PC-3 (cell line): ENCODE measurements at regions of chr4 and their contacts with region 1.

Region 1: GRCh38 chr4:101347557-101348366 is 436 bp upstream of the PPP3CA start:
- DNase-seq: peak; percentile 91
- ATAC-seq: peak; percentile 65
- H3K4me3 ChIP-seq: peak overlapping the region; percentile 97
- H3K27ac ChIP-seq: peak overlapping the region; percentile 93
- H3K4me1 ChIP-seq: peaks cover 27% of the 10 kb centered on the region
- H3K27me3 ChIP-seq: no peaks in the 10 kb centered on the region
- CTCF ChIP-seq: no peak

Region 2: GRCh38 chr4:101160792-101161592 is 186.8 kb before region 1 on chr4:
- CTCF ChIA-PET with region 1: no interaction called
- POLR2A ChIA-PET with region 1: interaction called, 6 read pairs
- intact Hi-C with region 1: loop called (anchors 1 kb)
- DNase-seq: peak; percentile 91
- ATAC-seq: peak; percentile 88
- H3K4me3 ChIP-seq: no peak overlapping the region
- H3K27ac ChIP-seq: peak overlapping the region; percentile 100
- H3K4me1 ChIP-seq: peaks cover 31% of the 10 kb centered on the region
- H3K27me3 ChIP-seq: no peaks in the 10 kb centered on the region
- CTCF ChIP-seq: no peak

Region 3: GRCh38 chr4:101259876-101260275 is 87.9 kb before region 1 on chr4:
- CTCF ChIA-PET with region 1: no interaction called
- POLR2A ChIA-PET with region 1: no interaction called
- intact Hi-C with region 1: loop called (anchors 10 kb)
- DNase-seq: no peak
- ATAC-seq: no peak
- H3K4me3 ChIP-seq: no peak overlapping the region
- H3K27ac ChIP-seq: no peak overlapping the region
- H3K4me1 ChIP-seq: peaks cover 13% of the 10 kb centered on the region
- H3K27me3 ChIP-seq: no peaks in the 10 kb centered on the region
- CTCF ChIP-seq: no peak

Region 4: GRCh38 chr4:101563126-101563525 is 215.4 kb after region 1 on chr4:
- CTCF ChIA-PET with region 1: no interaction called
- POLR2A ChIA-PET with region 1: no interaction called
- intact Hi-C with region 1: no loop called
- DNase-seq: no peak
- ATAC-seq: no peak
- H3K4me3 ChIP-seq: no peak overlapping the region
- H3K27ac ChIP-seq: no peak overlapping the region
- H3K4me1 ChIP-seq: no peaks in the 10 kb centered on the region
- H3K27me3 ChIP-seq: no peaks in the 10 kb centered on the region
- CTCF ChIP-seq: no peak

Region 5: GRCh38 chr4:101730291-101731117 is 382.7 kb after region 1 on chr4:
- CTCF ChIA-PET with region 1: interaction called, 3 read pairs
- POLR2A ChIA-PET with region 1: interaction called, 6 read pairs
- intact Hi-C with region 1: loop called (anchors 2 kb)
- DNase-seq: peak; percentile 78
- ATAC-seq: peak; percentile 50
- H3K4me3 ChIP-seq: no peak overlapping the region
- H3K27ac ChIP-seq: no peak overlapping the region
- H3K4me1 ChIP-seq: no peaks in the 10 kb centered on the region
- H3K27me3 ChIP-seq: no peaks in the 10 kb centered on the region
- CTCF ChIP-seq: peak; percentile 81

Region 6: DNA sequence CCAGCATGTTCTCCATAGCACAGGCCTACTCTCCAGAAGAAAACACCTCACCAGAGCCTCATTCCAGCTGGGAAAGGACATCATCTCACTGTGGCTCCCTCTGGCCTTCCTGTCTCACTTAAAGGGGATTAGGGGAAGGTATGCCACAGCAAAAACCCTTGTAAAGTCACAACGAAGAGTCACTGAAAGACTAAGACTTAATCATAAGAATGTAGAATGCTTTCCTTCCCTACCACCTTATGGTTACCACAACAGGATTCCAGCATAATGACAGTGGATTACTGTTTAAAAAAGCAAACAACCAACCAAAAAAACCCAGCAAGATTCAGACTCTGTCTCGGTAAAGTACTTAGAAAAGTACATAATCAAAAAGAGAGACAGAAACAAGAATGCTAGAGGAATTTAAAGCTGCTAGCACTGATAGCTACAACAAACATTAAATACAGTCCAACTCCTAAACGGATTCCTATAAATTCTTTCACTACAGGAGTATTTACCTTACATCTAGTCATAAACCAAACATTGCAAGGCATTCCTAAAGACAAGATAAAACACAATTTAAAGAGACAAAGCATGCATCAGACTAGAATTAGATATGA is 517.8 kb after region 1 on chr4:
- CTCF ChIA-PET with region 1: no interaction called
- POLR2A ChIA-PET with region 1: no interaction called
- intact Hi-C with region 1: loop called (anchors 2 kb)
- DNase-seq: peak; percentile 83
- ATAC-seq: peak; percentile 89
- H3K4me3 ChIP-seq: peak overlapping the region; percentile 1; the same call in 1 of the 2 replicates
- H3K27ac ChIP-seq: peak overlapping the region; percentile 91
- H3K4me1 ChIP-seq: peaks cover 24% of the 10 kb centered on the region
- H3K27me3 ChIP-seq: no peaks in the 10 kb centered on the region
- CTCF ChIP-seq: no peak

Region 7: DNA sequence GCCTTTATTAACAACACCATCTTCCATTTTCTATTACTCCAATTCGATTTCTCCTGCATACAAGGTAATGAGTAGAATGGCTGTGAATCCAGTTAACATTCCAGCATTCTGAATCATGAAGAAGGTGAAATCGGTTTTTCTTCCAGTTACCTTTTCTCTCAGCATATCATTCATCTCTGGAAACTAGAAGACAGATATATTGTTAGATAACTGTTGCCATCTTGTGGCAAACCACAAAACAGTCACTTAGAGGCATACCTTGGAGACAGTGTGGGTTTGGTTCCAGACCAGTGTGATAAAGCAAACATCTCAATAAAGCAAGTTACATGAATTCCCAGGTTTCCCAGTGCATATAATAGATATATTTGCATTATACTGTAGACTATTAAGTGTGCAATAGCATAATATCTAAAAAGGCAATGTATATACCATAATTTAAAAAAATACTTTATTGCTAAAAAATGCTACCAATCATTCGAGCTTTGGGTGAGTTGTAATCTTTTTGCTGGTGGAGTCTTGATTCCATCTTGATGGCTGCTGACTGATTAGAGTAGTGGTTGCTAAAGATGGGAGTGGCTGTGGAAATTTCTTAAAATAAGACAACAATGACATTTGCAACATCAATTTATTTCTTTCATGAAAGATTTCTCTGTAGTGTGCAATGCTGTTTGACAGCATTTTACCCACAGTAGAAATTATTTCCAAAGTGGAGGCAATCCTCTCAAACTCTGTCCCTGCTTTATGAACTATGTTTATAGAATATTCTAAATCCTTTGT is 915.4 kb after region 1 on chr4:
- CTCF ChIA-PET with region 1: no interaction called
- POLR2A ChIA-PET with region 1: no interaction called
- intact Hi-C with region 1: loop called (anchors 5 kb)
- DNase-seq: peak; percentile 80
- ATAC-seq: peak; percentile 91
- H3K4me3 ChIP-seq: no peak overlapping the region
- H3K27ac ChIP-seq: no peak overlapping the region
- H3K4me1 ChIP-seq: peaks cover 7% of the 10 kb centered on the region
- H3K27me3 ChIP-seq: no peaks in the 10 kb centered on the region
- CTCF ChIP-seq: peak; percentile 71